Activated CD4-positive, alpha-beta T cell treated with anti-CD3 and anti-CD28 coated beads for 36 hours (primary cell): ENCODE measurements at regions of chr12 and their contacts with region 1.

Region 1: DNA sequence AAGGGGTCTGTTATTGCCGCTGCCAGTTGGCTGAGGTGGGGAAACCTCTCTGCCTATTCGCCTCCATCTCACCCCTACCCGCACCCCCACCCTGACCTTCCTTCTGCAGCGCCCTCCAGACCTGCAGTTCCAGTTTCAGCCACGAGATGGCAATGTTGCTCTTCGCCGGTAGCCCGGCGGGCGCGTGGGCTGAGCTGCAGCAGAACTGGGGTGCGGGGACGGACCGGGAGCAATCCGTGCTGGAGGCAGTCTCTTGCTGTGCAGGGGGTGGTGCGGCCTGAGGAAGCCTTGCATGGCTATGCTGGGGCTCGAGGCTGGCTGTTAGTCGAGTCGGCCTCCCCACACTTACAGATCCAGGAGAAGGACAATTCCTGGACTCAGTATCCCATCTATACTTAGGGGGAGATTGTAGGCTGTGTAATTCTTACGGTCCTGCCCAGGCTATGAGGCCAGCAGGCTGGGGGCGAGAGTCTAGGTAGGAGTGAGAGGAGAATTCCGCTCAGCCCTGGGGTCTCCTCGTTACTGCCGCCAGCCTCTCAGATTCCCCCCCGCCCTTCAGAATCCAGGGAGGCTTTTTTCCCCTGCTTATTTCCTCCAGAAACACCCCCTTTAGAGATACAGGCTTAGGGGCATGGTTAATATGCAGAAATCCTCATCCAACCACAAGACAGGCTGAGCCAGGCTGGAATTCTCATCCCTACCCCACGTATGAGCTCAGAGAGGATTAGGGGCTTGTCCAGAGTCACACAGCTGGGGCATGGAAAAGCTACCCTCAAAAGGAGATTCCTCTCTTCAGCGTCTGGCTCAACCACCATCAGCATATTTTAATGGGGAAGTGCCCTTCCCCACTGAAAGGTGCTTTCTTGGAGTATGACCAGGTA is 118.2 kb downstream of the AACS start:
- DNase-seq: peak; percentile 90
- ATAC-seq: peak; percentile 64
- H3K4me3 Mint-ChIP-seq: no peak overlapping the region
- H3K27ac Mint-ChIP-seq: no peak overlapping the region
- H3K4me1 Mint-ChIP-seq: peaks cover 6% of the 10 kb centered on the region
- H3K27me3 Mint-ChIP-seq: peaks cover 52% of the 10 kb centered on the region

Region 2: DNA sequence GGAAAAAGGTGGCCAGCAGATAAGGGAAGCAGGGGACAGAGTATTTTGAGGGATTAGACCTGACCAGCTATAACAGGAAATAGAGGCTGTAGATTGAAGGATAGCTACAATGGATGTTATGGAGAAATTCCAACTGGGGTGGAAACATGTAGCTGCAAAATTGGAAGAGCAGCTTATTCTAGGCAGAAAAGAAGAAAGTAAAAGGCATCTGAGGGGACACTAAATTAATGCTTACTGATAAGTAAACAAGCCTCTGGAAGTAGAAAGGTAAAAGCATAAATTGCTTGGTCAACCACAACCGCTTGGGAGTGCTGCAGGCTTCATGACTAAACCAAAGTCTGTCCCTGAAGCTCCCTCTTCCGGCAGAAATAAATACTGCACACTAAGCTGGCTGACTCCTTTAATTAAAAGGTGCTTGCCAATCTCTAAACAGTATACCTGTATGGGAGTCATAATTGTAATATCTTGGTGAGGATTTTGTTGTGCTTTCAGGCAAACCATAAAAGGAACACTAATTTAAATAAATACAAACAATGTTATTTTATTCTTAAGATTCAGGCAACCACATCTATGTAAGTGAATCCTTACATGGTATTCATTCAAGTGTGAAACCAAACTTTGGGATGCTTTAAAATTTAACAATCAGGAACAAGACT is 276.7 kb before region 1 on chr12:
- CTCF ChIA-PET with region 1: no interaction called
- POLR2A ChIA-PET with region 1: no interaction called
- intact Hi-C with region 1: loop called in 1 of 2 experiments (anchors 10 kb)
- DNase-seq: peak; percentile 93
- ATAC-seq: peak; percentile 88
- H3K4me3 Mint-ChIP-seq: no peak overlapping the region
- H3K27ac Mint-ChIP-seq: peak overlapping the region; percentile 28
- H3K4me1 Mint-ChIP-seq: peaks cover 25% of the 10 kb centered on the region
- H3K27me3 Mint-ChIP-seq: no peaks in the 10 kb centered on the region

Region 3: DNA sequence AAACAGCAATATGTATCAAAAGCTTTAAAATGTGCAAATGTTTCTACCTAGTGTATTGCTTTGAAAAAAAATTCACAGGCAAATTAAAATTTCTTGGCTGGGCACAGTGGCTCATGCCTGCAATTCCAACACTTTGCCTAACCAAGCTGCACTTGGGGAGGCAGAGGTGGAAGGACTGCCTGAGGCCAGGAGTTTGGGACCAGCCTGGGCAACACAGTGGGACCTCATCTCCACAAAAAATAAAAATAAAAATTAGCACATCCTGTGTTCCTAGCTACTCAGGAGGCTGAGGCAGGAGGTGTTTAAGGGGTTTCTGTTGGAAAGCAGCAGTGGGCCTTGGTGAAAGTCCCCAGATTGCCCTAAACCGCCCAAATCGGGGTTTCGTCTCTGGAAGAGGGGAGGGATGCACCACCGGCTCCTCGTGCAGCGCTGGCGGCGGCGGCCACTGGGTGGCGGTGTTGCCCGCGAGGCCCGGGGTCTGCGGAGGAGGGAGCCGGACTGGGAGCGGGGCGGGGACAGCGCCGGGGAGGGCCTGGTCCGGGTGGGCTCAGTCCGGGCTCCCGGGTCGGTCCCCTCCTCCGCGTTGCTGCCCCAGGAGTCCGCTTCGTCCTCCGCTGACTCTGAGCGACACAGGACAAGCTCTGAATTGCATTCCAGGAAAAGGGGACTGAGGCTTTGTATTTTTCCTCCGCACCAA is 147.4 kb after region 1 on chr12:
- CTCF ChIA-PET with region 1: interaction called, 4 read pairs
- POLR2A ChIA-PET with region 1: no interaction called
- intact Hi-C with region 1: loop called in 1 of 2 experiments (anchors 2 kb)
- DNase-seq: peak; percentile 77
- ATAC-seq: peak; percentile 69
- H3K4me3 Mint-ChIP-seq: no peak overlapping the region
- H3K27ac Mint-ChIP-seq: no peak overlapping the region
- H3K4me1 Mint-ChIP-seq: no peaks in the 10 kb centered on the region
- H3K27me3 Mint-ChIP-seq: peaks cover 29% of the 10 kb centered on the region

Region 4: DNA sequence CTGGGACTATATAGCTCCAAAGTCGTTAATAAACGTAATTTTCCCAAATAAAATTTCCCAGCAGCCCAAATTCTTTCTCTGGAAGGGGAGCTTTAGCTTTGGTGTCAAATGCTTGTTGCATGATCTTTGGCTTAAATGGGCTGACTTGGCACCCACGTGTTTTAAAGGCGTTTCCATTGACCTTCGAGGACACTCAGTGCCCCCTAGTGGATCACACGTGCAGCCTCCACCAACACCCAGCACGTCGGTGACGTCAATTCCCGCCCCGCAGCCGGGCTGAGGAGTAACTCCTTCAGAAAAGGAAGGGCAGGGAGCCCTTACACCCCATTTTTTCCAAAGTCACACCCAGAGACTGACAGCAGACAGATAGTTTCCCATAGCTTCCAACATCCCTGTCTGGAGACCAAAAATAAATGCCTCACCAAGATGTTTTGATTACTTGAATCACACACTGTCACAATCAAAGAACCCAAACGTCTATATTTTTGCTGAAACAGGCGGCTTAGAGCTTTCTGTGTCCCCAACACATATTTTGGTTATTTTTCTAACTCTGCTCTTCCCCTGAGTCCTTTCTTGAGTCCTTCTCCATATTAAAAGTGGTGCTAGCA is 589.7 kb after region 1 on chr12:
- CTCF ChIA-PET with region 1: no interaction called
- POLR2A ChIA-PET with region 1: no interaction called
- intact Hi-C with region 1: loop called in 1 of 2 experiments (anchors 10 kb)
- DNase-seq: peak; percentile 58
- ATAC-seq: peak; percentile 49
- H3K4me3 Mint-ChIP-seq: no peak overlapping the region
- H3K27ac Mint-ChIP-seq: no peak overlapping the region
- H3K4me1 Mint-ChIP-seq: no peaks in the 10 kb centered on the region
- H3K27me3 Mint-ChIP-seq: peaks cover 6% of the 10 kb centered on the region

Region 5: GRCh38 chr12:126874427-126875026 is 1691.1 kb after region 1 on chr12:
- CTCF ChIA-PET with region 1: no interaction called
- POLR2A ChIA-PET with region 1: no interaction called
- intact Hi-C with region 1: loop called (anchors 5 to 10 kb)
- DNase-seq: peak; percentile 83
- ATAC-seq: peak; percentile 64
- H3K4me3 Mint-ChIP-seq: no peak overlapping the region
- H3K27ac Mint-ChIP-seq: no peak overlapping the region
- H3K4me1 Mint-ChIP-seq: no peaks in the 10 kb centered on the region
- H3K27me3 Mint-ChIP-seq: peaks cover 4% of the 10 kb centered on the region